ENCODE measurements at regions of chr4 and their contacts with region 1.

Region 1: DNA sequence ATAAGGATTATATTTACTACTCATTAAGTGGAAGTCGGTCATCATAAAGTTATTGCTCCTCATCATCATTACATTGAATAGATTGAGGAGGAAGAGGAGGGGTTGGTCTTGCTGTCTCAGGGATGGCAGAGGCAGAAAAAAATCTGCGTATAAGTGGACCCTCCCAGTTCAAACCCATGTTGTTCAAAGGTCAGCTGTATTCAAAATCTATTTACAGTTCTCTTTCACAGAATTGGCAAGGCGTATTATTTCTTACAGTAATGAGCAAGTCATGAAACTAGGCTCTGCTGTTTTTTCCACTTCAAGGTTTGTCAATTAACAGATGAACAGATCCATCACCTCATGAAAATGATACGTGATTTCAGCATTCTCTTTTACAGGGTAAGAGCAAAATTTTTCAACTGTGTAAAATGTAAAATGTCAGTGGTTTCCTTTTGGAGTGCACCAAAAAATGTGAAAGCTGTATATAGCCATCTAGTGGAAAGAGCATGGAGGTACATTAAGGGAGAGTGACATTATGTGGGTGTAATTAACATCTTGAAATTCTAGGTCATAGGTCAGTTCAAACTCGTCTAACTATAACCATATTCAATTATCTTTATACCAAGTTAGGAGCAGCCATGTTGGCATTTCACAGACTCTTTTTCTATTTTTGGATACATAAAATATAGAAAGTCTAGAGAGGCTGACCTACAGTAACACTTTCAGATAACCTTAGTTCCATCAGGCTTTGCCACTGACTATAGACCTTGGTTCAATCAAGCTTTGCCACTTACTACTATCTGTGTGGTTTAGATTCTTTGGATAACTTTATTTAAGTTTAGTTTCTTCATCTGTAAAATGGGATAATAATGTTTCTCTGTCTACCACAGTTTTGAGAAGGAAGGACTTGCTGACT is 30.1 kb downstream of the NEIL3 start:
- DNase-seq: no peak
- H3K4me3 ChIP-seq: no peak overlapping the region
- H3K27me3 ChIP-seq: no peaks in the 10 kb centered on the region
- CTCF ChIP-seq: peak; percentile 70

Region 2: GRCh38 chr4:177108708-177109107 is 231.0 kb before region 1 on chr4:
- CTCF ChIA-PET with region 1: interaction called, 20 read pairs
- POLR2A ChIA-PET with region 1: no interaction called
- DNase-seq: no peak
- H3K4me3 ChIP-seq: no peak overlapping the region
- H3K27me3 ChIP-seq: no peaks in the 10 kb centered on the region
- CTCF ChIP-seq: peak; percentile 59

Region 3: DNA sequence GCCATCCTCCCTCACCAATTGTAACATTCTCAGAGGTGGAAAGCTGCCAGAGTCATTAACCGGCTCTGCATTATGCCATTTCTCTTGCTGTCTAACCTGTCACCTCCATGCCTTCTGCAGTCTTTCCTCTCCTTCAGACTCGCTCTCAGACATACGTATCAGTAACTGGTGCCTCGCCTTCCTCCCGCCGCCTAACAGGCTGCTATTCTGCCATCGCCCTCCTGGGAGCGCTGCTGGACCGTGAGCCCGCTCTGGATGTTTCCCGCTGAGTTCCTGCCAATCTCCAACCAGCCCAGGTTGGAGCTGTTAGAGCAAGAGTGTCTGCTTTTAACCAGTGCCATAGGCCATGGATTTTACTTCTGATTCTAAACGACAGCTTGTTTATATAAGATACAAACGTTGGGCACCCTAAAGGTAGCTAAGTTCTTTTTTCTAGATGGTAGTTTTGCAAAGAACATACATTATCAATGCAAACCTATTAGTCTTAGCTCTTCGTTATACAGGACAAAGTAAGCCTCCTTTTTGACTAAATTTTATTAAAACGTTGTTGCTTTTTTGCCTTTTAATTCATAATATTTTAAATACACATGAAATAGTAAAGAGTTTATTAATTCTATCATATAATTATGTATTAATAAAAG is 89.5 kb before region 1 on chr4:
- CTCF ChIA-PET with region 1: interaction called, 18 read pairs
- POLR2A ChIA-PET with region 1: interaction called, 9 read pairs
- DNase-seq: no peak
- H3K4me3 ChIP-seq: no peak overlapping the region
- H3K27me3 ChIP-seq: no peaks in the 10 kb centered on the region
- CTCF ChIP-seq: peak; percentile 81